ENCODE measurements at regions of chr3 and their contacts with region 1.

Region 1: DNA sequence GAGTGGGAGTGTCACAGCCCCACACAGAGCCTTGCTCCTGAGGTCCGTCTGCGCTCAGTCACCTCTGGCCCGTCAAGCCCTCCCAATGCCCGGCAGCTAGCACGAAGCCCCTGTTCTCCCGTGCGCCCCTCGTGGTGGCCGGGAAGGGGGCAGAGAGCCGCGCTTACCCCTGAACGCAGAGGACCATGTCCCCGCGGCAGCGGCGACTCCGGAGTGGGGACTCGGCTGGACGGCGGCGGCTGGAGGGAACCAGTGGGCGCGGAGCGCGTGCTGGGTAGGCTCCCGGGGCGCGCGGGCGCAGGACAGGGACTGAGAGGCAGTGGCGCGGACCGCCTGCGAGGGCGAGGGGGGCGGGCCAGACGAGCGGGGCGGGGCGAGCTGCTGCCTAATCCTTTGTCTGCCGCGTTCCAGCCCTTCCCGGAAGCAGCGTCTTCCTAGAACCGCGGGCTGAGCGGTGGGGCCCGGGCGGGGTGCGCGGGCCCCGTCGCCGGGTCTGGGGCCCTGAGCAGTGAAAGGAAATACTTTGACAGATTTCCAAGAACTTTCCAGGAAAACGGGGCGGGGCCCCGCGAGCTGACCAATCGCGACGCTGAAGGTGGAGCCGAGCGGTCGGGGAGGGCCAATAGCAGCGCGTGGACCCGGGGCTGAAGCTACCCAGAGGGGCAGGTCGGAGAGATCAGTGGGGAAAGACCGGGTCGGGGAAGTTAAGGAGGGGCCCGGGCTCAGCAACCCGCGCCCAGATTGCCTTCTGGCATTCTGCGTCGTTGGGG is at the start of gene CISH:
- DNase-seq: peak; percentile 90 to 94 (median 93)
- H3K4me3 ChIP-seq: peak within 1 kb of the TSS; percentile 93 to 96
- H3K4me3 Mint-ChIP-seq: peak within 1 kb of the TSS; percentile 92 to 99 (median 96)
- H3K27ac ChIP-seq: peak within 1 kb of the TSS; percentile 81
- H3K27ac Mint-ChIP-seq: peak within 1 kb of the TSS; percentile 90 to 97 (median 94)
- H3K4me1 ChIP-seq: peaks cover 66% of the 10 kb centered on the region
- H3K4me1 Mint-ChIP-seq: peaks cover 44 to 80% (median 63%) of the 10 kb centered on the region in 4 donors
- H3K27me3 ChIP-seq: no peaks in the 10 kb centered on the region
- H3K27me3 Mint-ChIP-seq: no peaks in the 10 kb centered on the region
- total RNA-seq, gene CISH: 14.7 to 15.2 TPM

Region 2: DNA sequence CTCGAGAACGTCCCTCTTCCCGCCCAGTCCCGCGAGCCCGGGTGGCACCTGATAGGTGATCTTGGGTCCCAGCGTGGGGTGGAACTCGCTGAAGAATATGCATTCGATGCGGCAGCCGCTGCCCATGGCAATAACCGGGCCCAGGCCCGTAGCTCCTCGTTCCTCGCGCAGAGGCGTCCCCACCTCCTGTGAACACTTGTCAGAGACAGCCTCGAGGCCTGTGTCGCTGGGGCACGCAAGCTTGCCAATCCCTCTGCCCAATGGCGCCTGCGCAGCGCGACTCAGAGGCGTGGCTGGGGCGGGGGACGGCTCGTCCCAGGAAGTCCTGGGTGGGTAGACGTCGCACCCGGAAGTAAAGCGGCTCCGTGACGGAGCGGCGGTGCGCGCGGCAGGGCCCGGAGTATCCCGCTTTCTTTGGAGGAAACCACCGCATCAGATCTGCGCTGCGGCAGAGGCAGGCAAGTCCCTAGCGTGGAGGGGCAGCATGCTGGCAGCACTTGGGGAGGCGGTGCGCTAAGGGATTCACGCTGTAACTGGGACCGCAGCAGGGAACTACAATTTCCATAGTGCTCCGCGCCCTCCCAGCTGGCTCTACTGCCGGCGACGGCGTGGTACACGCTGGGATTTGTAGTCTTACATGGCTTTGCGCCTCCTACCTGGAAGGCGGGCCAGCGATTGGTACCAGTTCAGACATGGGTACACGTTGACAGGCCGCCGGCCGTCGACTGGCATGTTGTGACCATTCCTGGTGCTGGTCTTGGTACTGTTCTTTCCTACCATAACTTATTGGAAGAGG is 260.9 kb before region 1 on chr3 and contains the starts of genes CYB561D2 and NPRL2:
- CTCF ChIA-PET with region 1: interaction called, 6 read pairs
- POLR2A ChIA-PET with region 1: interaction called, 8 read pairs
- intact Hi-C with region 1: loop called (anchors 5 kb)
- DNase-seq: peak; percentile 99 to 100 (median 99)
- H3K4me3 ChIP-seq: peak within 1 kb of the TSS; percentile 66 to 98
- H3K4me3 Mint-ChIP-seq: peak within 1 kb of the TSS; percentile 91 to 99 (median 96)
- H3K27ac ChIP-seq: peak within 1 kb of the TSS; percentile 94
- H3K27ac Mint-ChIP-seq: peak within 1 kb of the TSS; percentile 96 to 99 (median 99)
- H3K4me1 ChIP-seq: peaks cover 58% of the 10 kb centered on the region
- H3K4me1 Mint-ChIP-seq: peaks cover 28 to 78% (median 53%) of the 10 kb centered on the region in 4 donors
- H3K27me3 ChIP-seq: no peaks in the 10 kb centered on the region
- H3K27me3 Mint-ChIP-seq: no peaks in the 10 kb centered on the region
- total RNA-seq, gene CYB561D2: 39.6 to 40.0 TPM
- total RNA-seq, gene NPRL2: 50.0 to 53.0 TPM

Region 3: GRCh38 chr3:50568947-50569749 is 42.5 kb before region 1 on chr3 and contains the start of gene HEMK1:
- CTCF ChIA-PET with region 1: interaction called, 996 read pairs
- POLR2A ChIA-PET with region 1: interaction called, 1,072 read pairs
- intact Hi-C with region 1: loop called (anchors 1 kb)
- DNase-seq: peak; percentile 90 to 92 (median 91)
- H3K4me3 ChIP-seq: peak within 1 kb of the TSS; percentile 88 to 93
- H3K4me3 Mint-ChIP-seq: peak within 1 kb of the TSS; percentile 93 to 98 (median 96)
- H3K27ac ChIP-seq: peak within 1 kb of the TSS; percentile 83
- H3K27ac Mint-ChIP-seq: peak within 1 kb of the TSS; percentile 92 to 100 (median 98)
- H3K4me1 ChIP-seq: peaks cover 71% of the 10 kb centered on the region
- H3K4me1 Mint-ChIP-seq: peaks cover 45 to 83% (median 57%) of the 10 kb centered on the region in 4 donors
- H3K27me3 ChIP-seq: no peaks in the 10 kb centered on the region
- H3K27me3 Mint-ChIP-seq: no peaks in the 10 kb centered on the region
- total RNA-seq, gene HEMK1: 55.3 to 56.7 TPM

Region 4: DNA sequence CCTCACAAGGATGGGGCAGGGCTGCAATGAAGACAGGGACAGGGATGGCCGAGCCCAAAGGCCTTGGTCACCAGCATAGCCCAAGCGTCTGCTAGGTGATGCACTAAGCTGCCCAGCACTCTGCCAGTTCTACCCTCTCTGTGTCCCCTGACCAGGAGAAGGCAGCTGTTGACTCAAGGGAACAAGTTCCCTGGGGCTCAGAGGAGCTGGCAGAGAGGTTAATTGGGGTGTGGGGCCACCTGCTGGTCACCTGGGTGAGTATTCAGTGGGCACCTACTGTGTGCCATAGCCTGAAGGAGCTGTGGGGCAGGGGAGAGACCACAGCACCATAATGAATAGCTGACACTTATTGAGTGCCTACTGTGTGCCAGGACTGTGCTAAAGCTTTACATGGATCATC is 41.1 kb after region 1 on chr3:
- CTCF ChIA-PET with region 1: interaction called, 375 read pairs
- POLR2A ChIA-PET with region 1: interaction called, 89 read pairs
- intact Hi-C with region 1: loop called (anchors 1 kb)
- DNase-seq: peak in 4 of 5 donors; percentile 40 to 54 (median 50)
- H3K4me3 ChIP-seq: no peak overlapping the region
- H3K4me3 Mint-ChIP-seq: no peak overlapping the region
- H3K27ac ChIP-seq: no peak overlapping the region
- H3K27ac Mint-ChIP-seq: peak overlapping the region in 1 of 7 donors; percentile 76
- H3K4me1 ChIP-seq: no peaks in the 10 kb centered on the region
- H3K4me1 Mint-ChIP-seq: peaks cover 0 to 6% (median under 1%) of the 10 kb centered on the region in 4 donors
- H3K27me3 ChIP-seq: no peaks in the 10 kb centered on the region
- H3K27me3 Mint-ChIP-seq: no peaks in the 10 kb centered on the region

Region 5: GRCh38 chr3:51099794-51100535 is 488.3 kb after region 1 on chr3:
- CTCF ChIA-PET with region 1: no interaction called
- POLR2A ChIA-PET with region 1: no interaction called
- intact Hi-C with region 1: loop called (anchors 2 kb)
- DNase-seq: peak in 1 of 5 donors; percentile 2
- H3K4me3 ChIP-seq: no peak overlapping the region
- H3K4me3 Mint-ChIP-seq: no peak overlapping the region
- H3K27ac ChIP-seq: no peak overlapping the region
- H3K27ac Mint-ChIP-seq: no peak overlapping the region
- H3K4me1 ChIP-seq: no peaks in the 10 kb centered on the region
- H3K4me1 Mint-ChIP-seq: peaks cover 5 to 9% (median 7%) of the 10 kb centered on the region in 4 donors
- H3K27me3 ChIP-seq: no peaks in the 10 kb centered on the region
- H3K27me3 Mint-ChIP-seq: peaks cover under 1 to 2% of the 10 kb centered on the region in 2 donors

Region 6: DNA sequence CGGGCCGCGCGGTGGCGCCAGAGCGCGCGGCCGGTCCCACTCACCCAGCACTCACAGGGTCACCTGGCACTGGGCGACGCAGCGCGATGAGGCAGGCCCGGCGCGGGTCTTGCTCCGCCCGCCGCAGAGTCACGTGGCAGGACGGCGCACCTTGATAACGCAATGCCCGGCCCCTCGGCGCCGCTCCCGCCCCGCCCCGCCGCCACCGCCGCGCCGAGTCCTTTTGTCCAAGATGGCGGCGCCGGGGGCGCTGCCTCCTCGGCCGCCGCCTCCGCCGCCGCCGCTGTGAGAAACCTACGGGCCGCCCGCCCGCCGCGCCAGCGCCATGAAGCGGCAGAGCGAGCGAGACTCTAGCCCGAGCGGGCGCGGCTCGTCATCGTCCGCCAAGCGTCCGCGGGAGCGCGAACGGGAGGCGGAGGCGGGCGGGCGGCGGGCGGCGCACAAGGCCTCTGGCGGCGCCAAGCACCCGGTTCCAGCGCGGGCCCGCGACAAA is 779.5 kb after region 1 on chr3 and contains the start of gene RBM15B:
- CTCF ChIA-PET with region 1: interaction called, 20 read pairs
- POLR2A ChIA-PET with region 1: interaction called, 31 read pairs
- intact Hi-C with region 1: no loop called
- DNase-seq: peak; percentile 96 to 98 (median 97)
- H3K4me3 ChIP-seq: peak within 1 kb of the TSS; percentile 57
- H3K4me3 Mint-ChIP-seq: peak within 1 kb of the TSS; percentile 76 to 91 (median 83)
- H3K27ac ChIP-seq: peak within 1 kb of the TSS; percentile 79
- H3K27ac Mint-ChIP-seq: peak within 1 kb of the TSS; percentile 89 to 97 (median 95)
- H3K4me1 ChIP-seq: peaks cover 69% of the 10 kb centered on the region
- H3K4me1 Mint-ChIP-seq: peaks cover 33 to 81% (median 61%) of the 10 kb centered on the region in 4 donors
- H3K27me3 ChIP-seq: no peaks in the 10 kb centered on the region
- H3K27me3 Mint-ChIP-seq: no peaks in the 10 kb centered on the region
- total RNA-seq, gene RBM15B: 38.3 to 39.9 TPM

Measured in CD4-positive, alpha-beta memory T cell (primary cell).